ENCODE measurements at regions of chr1 and their contacts with region 1.

Region 1: DNA sequence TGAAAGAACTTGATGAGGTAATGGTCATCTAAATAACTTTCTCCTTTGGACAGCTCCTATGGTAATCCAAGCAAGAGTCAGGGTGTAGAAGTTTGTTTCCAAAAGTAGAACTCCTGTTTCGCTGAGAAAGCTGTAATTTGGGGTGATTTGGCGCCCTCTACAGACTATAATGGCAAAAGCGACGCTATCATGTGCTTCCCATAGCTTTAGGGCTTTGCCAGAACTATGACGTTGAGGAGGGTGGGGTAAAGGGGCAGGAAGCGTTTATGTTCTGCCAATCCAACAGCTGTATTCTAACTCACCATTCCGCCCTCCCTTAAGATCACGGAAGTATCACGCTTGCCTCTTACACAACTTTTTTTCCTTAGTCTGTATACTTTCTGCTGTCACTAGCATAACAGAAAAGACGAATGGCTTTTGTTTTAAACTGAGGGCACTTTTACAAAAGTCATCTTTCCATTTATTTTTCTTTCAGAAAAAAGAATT is at the start of gene FMO4:
- DNase-seq: peak; percentile 62 to 97 (median 79)
- ATAC-seq: peak; percentile 100
- H3K4me3 ChIP-seq: peak within 1 kb of the TSS; percentile 11 to 30
- H3K4me3 Mint-ChIP-seq: peak within 1 kb of the TSS; percentile 80
- H3K27ac ChIP-seq: peak within 1 kb of the TSS; percentile 41 to 48
- H3K27ac Mint-ChIP-seq: peak within 1 kb of the TSS; percentile 92
- H3K4me1 ChIP-seq: peaks cover 7% of the 10 kb centered on the region
- H3K4me1 Mint-ChIP-seq: peaks cover 21% of the 10 kb centered on the region
- H3K27me3 ChIP-seq: no peaks in the 10 kb centered on the region
- H3K27me3 Mint-ChIP-seq: no peaks in the 10 kb centered on the region
- CTCF ChIP-seq: peak; percentile 74
- total RNA-seq, gene FMO4: 0.87 to 1.0 TPM

Region 2: GRCh38 chr1:170010443-170010842 is 1303.4 kb before region 1 on chr1:
- CTCF ChIA-PET with region 1: no interaction called
- POLR2A ChIA-PET with region 1: no interaction called
- intact Hi-C with region 1: loop called in 1 of 2 experiments (anchors 5 kb)
- DNase-seq: peak in 4 of 9 experiments; percentile 11 to 37 (median 16)
- ATAC-seq: no peak
- H3K4me3 ChIP-seq: no peak overlapping the region
- H3K4me3 Mint-ChIP-seq: no peak overlapping the region
- H3K27ac ChIP-seq: no peak overlapping the region
- H3K27ac Mint-ChIP-seq: no peak overlapping the region
- H3K4me1 ChIP-seq: no peaks in the 10 kb centered on the region
- H3K4me1 Mint-ChIP-seq: no peaks in the 10 kb centered on the region
- H3K27me3 ChIP-seq: no peaks in the 10 kb centered on the region
- H3K27me3 Mint-ChIP-seq: no peaks in the 10 kb centered on the region
- CTCF ChIP-seq: peak; percentile 20

Region 3: GRCh38 chr1:170531758-170532657 is 781.9 kb before region 1 on chr1 and contains the start of gene GORAB:
- CTCF ChIA-PET with region 1: no interaction called
- POLR2A ChIA-PET with region 1: no interaction called
- intact Hi-C with region 1: loop called (anchors 10 kb)
- DNase-seq: peak; percentile 72 to 93 (median 85)
- ATAC-seq: peak; percentile 90
- H3K4me3 ChIP-seq: peak within 1 kb of the TSS; percentile 73 to 86
- H3K4me3 Mint-ChIP-seq: no peak within 1 kb of the TSS
- H3K27ac ChIP-seq: peak within 1 kb of the TSS; percentile 80 to 91
- H3K27ac Mint-ChIP-seq: no peak within 1 kb of the TSS
- H3K4me1 ChIP-seq: peaks cover 14% of the 10 kb centered on the region
- H3K4me1 Mint-ChIP-seq: peaks cover 22% of the 10 kb centered on the region
- H3K27me3 ChIP-seq: no peaks in the 10 kb centered on the region
- H3K27me3 Mint-ChIP-seq: no peaks in the 10 kb centered on the region
- CTCF ChIP-seq: no peak
- total RNA-seq, gene GORAB: 24.8 to 26.1 TPM

Region 4: DNA sequence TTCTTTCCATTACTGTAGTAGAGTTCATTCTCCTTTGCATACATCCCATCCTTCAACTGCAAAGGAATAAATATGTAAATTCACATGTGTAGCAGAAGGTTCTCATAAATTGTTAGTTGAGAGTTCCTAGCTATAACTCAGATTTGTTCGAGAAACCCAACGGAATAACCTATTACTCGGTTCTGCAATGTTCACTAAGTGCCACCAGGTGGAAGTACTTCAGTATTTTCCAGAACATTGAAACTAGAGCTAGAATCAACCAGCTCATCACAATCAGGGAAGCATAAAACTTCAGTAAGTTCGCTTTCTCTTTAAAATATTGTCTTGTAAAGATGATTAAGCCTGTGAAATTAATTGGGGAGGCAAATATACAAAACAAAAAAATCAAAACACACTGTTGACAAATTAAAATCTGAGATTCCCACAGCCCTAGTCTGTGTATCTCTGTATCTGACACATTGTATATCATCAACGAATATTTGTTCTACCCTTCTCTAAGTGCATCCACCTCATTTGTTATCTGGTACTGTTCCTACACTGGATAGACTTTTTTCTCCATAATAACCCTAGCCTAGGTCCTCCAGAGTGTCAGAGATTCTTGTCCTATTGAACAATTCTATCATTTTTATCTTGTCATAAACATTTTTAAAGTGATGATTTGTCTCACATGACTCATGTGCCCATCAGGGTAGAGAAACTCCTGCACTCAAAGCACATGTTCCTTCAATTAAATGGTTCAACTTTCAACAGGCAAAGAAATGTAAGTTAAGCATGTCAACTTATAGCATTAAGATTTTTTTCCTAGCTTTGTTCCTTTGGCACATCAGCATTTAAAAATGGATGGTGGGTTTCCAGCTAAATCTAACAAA is 346.6 kb before region 1 on chr1:
- CTCF ChIA-PET with region 1: interaction called, 35 read pairs
- POLR2A ChIA-PET with region 1: no interaction called
- intact Hi-C with region 1: loop called (anchors 1 kb)
- DNase-seq: peak in 2 of 9 experiments; percentile 13 to 25
- ATAC-seq: no peak
- H3K4me3 ChIP-seq: no peak overlapping the region
- H3K4me3 Mint-ChIP-seq: no peak overlapping the region
- H3K27ac ChIP-seq: no peak overlapping the region
- H3K27ac Mint-ChIP-seq: no peak overlapping the region
- H3K4me1 ChIP-seq: no peaks in the 10 kb centered on the region
- H3K4me1 Mint-ChIP-seq: no peaks in the 10 kb centered on the region
- H3K27me3 ChIP-seq: no peaks in the 10 kb centered on the region
- H3K27me3 Mint-ChIP-seq: peaks cover 19% of the 10 kb centered on the region
- CTCF ChIP-seq: peak; percentile 37

Region 5: DNA sequence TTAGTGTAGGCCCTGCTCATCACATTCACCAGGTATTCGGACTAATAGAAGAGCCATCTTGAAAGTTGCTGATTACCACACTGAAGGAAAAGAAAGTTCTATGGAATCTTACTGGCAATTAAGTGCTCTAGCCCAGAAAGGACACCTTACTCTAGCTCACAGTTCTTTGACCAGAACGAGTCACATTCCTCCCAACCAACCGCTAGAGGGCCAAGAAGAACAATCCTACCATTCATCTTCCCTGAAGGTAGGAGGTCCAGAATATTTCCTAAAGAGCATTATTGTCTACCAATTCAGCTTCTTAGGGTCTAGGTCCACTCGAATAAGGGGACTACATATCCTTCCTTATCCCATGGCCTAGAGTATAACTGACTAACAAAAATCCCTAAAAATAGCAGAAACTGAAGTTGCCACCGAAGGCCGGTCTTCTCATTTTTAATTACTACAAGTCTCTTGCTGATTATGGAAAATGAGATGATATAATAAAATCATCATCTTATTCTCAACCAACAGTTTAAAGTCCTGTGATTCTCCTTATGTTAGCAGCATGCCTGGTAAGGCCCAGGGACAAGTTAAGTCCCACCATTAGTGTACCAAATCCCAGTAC is 68.3 kb before region 1 on chr1:
- CTCF ChIA-PET with region 1: interaction called, 69 read pairs
- POLR2A ChIA-PET with region 1: no interaction called
- intact Hi-C with region 1: loop called (anchors 1 to 2 kb)
- DNase-seq: peak in 4 of 9 experiments; percentile 15 to 56 (median 30)
- ATAC-seq: no peak
- H3K4me3 ChIP-seq: no peak overlapping the region
- H3K4me3 Mint-ChIP-seq: no peak overlapping the region
- H3K27ac ChIP-seq: no peak overlapping the region
- H3K27ac Mint-ChIP-seq: no peak overlapping the region
- H3K4me1 ChIP-seq: no peaks in the 10 kb centered on the region
- H3K4me1 Mint-ChIP-seq: no peaks in the 10 kb centered on the region
- H3K27me3 ChIP-seq: no peaks in the 10 kb centered on the region
- H3K27me3 Mint-ChIP-seq: peaks cover 18% of the 10 kb centered on the region
- CTCF ChIP-seq: peak; percentile 52

Region 6: GRCh38 chr1:171841050-171841940 is 527.4 kb after region 1 on chr1 and contains the start of gene DNM3:
- CTCF ChIA-PET with region 1: no interaction called
- POLR2A ChIA-PET with region 1: no interaction called
- intact Hi-C with region 1: loop called in 1 of 2 experiments (anchors 10 kb)
- DNase-seq: peak; percentile 51 to 89 (median 77)
- ATAC-seq: peak; percentile 94
- H3K4me3 ChIP-seq: peak within 1 kb of the TSS; percentile 75 to 80
- H3K4me3 Mint-ChIP-seq: peak within 1 kb of the TSS; percentile 87
- H3K27ac ChIP-seq: no peak within 1 kb of the TSS
- H3K27ac Mint-ChIP-seq: peak within 1 kb of the TSS; percentile 16
- H3K4me1 ChIP-seq: peaks cover 9% of the 10 kb centered on the region
- H3K4me1 Mint-ChIP-seq: peaks cover 14% of the 10 kb centered on the region
- H3K27me3 ChIP-seq: peaks cover 4 to 9% of the 10 kb centered on the region in 2 experiments
- H3K27me3 Mint-ChIP-seq: peaks cover 16% of the 10 kb centered on the region
- CTCF ChIP-seq: no peak
- total RNA-seq, gene DNM3: 0.72 to 1.1 TPM